Activated CD4-positive, alpha-beta memory T cell treated with anti-CD3 and anti-CD28 coated beads for 36 hours (primary cell): ENCODE measurements at regions of chr1 and their contacts with region 1.

Region 1: GRCh38 chr1:30743584-30744059 is 14.0 kb downstream of the LAPTM5 start:
- DNase-seq: peak; percentile 80
- H3K4me3 Mint-ChIP-seq: peak overlapping the region; percentile 50
- H3K27ac Mint-ChIP-seq: peak overlapping the region; percentile 96
- H3K4me1 Mint-ChIP-seq: peaks cover 92% of the 10 kb centered on the region
- H3K27me3 Mint-ChIP-seq: no peaks in the 10 kb centered on the region

Region 2: DNA sequence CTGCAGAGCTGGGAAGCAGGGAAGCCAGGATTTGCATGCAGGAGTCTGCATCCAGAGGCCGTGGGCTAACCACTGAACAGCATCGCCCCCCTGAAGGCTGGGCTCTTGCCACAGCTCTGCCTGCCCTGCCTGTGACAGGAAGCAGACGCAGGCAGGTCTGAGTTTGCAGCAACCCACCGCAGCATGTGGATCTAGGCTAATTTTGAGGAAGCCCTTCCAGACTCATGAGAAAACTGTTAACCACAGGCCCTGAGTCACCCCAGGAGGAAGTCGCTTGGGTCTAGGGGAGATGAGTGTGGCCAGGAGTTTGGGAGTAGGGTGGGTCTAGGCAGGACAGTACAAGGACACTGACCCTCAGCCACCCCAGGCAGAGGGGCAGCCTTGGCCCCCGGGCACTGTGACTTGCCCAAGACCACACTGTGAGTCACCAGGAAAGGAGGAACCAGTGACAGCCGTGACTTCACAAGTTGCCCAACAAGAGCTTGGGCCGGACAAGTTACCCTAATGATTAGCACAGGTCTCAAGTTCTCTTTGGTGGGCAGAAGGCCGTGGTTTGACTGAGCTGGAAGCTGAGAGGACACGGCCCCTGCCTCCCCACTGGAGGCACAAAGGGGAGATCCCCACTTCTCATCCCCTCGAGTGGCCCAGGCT is 13.0 kb after region 1 on chr1:
- CTCF ChIA-PET with region 1: interaction called, 65 read pairs
- POLR2A ChIA-PET with region 1: interaction called, 75 read pairs
- intact Hi-C with region 1: loop called (anchors 1 kb)
- DNase-seq: peak; percentile 88
- H3K4me3 Mint-ChIP-seq: peak overlapping the region; percentile 98
- H3K27ac Mint-ChIP-seq: peak overlapping the region; percentile 99
- H3K4me1 Mint-ChIP-seq: peaks cover 86% of the 10 kb centered on the region
- H3K27me3 Mint-ChIP-seq: no peaks in the 10 kb centered on the region